PC-3 (cell line): ENCODE measurements at regions of chr12 and their contacts with region 1.

Region 1: GRCh38 chr12:105562199-105562971 is 231.9 kb downstream of the C12orf75 start:
- DNase-seq: peak; percentile 96
- ATAC-seq: peak; percentile 89
- H3K4me3 ChIP-seq: peak overlapping the region; percentile 60
- H3K27ac ChIP-seq: peak overlapping the region; percentile 87
- H3K4me1 ChIP-seq: peaks cover 21% of the 10 kb centered on the region
- H3K27me3 ChIP-seq: no peaks in the 10 kb centered on the region
- CTCF ChIP-seq: 0 out of 2 replicates have a peak, but pooled peaks have one; percentile 14

Region 2: GRCh38 chr12:105637470-105637869 is 75.1 kb after region 1 on chr12:
- CTCF ChIA-PET with region 1: no interaction called
- POLR2A ChIA-PET with region 1: no interaction called
- intact Hi-C with region 1: no loop called
- DNase-seq: no peak
- ATAC-seq: no peak
- H3K4me3 ChIP-seq: no peak overlapping the region
- H3K27ac ChIP-seq: no peak overlapping the region
- H3K4me1 ChIP-seq: no peaks in the 10 kb centered on the region
- H3K27me3 ChIP-seq: no peaks in the 10 kb centered on the region; the same call in 1 of the 2 replicates
- CTCF ChIP-seq: no peak

Region 3: GRCh38 chr12:105975351-105975750 is 413.0 kb after region 1 on chr12:
- CTCF ChIA-PET with region 1: no interaction called
- POLR2A ChIA-PET with region 1: interaction called, 16 read pairs
- intact Hi-C with region 1: no loop called
- DNase-seq: no peak
- ATAC-seq: no peak
- H3K4me3 ChIP-seq: no peak overlapping the region
- H3K27ac ChIP-seq: no peak overlapping the region
- H3K4me1 ChIP-seq: no peaks in the 10 kb centered on the region
- H3K27me3 ChIP-seq: peaks cover 2% of the 10 kb centered on the region; the same call in 1 of the 2 replicates
- CTCF ChIP-seq: no peak